Heart right ventricle (tissue), 16 donors: ENCODE measurements at regions of chr18 and their contacts with region 1.

Region 1: GRCh38 chr18:74551936-74552555 is 17.7 kb downstream of the CNDP1 start:
- DNase-seq: peak; percentile 70 to 89
- ATAC-seq: peak; percentile 86 to 95 (median 94)
- H3K4me3 ChIP-seq: no peak overlapping the region
- H3K27ac ChIP-seq: no peak overlapping the region
- H3K4me1 ChIP-seq: peaks cover 0 to 22% (median 15%) of the 10 kb centered on the region in 9 donors
- H3K27me3 ChIP-seq: no peaks in the 10 kb centered on the region
- CTCF ChIP-seq: peak; percentile 84 to 92 (median 88)

Region 2: GRCh38 chr18:74353169-74353775 is 198.8 kb before region 1 on chr18:
- intact Hi-C with region 1: loop called (anchors 1 to 5 kb)
- DNase-seq: peak; percentile 23 to 78
- ATAC-seq: peak; percentile 87 to 94 (median 90)
- H3K4me3 ChIP-seq: no peak overlapping the region
- H3K27ac ChIP-seq: no peak overlapping the region
- H3K4me1 ChIP-seq: peaks cover 0 to 17% (median 5%) of the 10 kb centered on the region in 9 donors
- H3K27me3 ChIP-seq: peaks cover 0 to 3% (median 0%) of the 10 kb centered on the region in 7 donors
- CTCF ChIP-seq: peak; percentile 59 to 91 (median 82)

Region 3: DNA sequence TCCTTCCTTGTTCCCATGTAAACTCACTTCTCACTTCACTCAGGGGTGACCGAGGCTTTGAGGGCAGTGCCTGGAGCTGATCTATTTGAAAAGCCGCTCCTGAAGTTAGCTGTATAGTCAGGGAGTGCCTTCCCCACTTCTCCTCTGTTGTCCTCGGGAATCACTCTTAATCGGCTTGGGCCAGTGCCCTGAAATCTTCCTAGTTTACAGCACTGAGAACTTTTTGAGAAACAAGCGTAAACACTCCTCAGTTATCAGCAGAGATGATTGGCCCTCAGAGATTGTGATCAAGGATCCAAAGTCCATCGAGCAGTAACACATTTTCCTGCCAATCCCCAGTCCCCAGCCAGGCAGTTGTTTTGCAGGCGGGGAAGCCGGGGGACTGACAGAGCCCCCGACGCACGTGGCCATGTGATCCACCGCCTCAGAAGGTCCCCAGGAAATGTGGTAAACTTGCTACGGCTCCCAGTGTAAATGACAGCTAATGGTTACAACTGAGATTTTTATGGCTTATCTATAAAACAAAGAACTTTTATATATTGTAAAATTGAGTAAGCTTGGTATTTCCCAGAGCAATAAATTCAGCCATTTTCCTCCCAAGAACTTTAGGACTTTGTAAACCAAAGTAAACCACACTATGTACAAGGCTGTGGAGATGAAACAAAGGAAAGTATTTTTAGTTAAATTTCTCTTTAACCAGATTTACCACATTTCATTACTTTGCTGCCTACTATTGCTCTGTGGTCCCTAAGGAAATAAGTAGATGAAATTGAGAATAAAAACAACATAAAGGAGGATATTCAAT is 182.9 kb before region 1 on chr18:
- intact Hi-C with region 1: loop called in 1 of 10 experiments (anchors 5 kb)
- DNase-seq: no peak
- ATAC-seq: no peak
- H3K4me3 ChIP-seq: no peak overlapping the region
- H3K27ac ChIP-seq: no peak overlapping the region
- H3K4me1 ChIP-seq: peaks cover 0 to 10% (median 0%) of the 10 kb centered on the region in 9 donors
- H3K27me3 ChIP-seq: no peaks in the 10 kb centered on the region
- CTCF ChIP-seq: no peak